Activated CD8-positive, alpha-beta T cell treated with anti-CD3 and anti-CD28 coated beads for 36 hours (primary cell): ENCODE measurements at regions of chr19 and their contacts with region 1.

Region 1: DNA sequence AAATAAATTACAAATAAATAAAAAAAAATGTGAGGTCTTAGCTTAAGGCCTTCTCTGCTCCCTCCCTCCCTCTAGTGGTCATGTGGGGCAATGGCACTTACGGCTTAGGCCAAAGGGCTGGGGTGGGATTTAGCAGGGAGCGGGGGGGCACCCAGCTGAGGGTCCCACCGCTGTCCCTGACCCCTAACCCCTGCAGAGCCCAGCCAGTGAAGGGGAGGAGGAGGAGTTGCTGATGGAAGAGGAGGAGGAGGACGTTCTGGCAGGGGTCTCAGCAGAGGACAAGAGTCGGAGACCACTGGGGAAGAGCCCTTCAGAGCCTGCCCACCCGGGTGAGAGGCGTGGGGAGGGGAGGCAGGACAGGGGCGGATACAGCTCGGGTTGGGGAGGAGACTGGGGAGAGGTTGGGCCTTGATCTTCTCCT is 9.3 kb downstream of the MPND start:
- DNase-seq: peak; percentile 75
- ATAC-seq: peak; percentile 90
- H3K4me3 Mint-ChIP-seq: no peak overlapping the region
- H3K27ac Mint-ChIP-seq: no peak overlapping the region
- H3K4me1 Mint-ChIP-seq: peaks cover 2% of the 10 kb centered on the region
- H3K27me3 Mint-ChIP-seq: no peaks in the 10 kb centered on the region
- CTCF ChIP-seq: peak; percentile 98

Region 2: GRCh38 chr19:4322942-4323665 is 29.6 kb before region 1 on chr19:
- CTCF ChIA-PET with region 1: interaction called, 12 read pairs
- POLR2A ChIA-PET with region 1: interaction called, 5 read pairs
- intact Hi-C with region 1: no loop called
- DNase-seq: no peak
- ATAC-seq: no peak
- H3K4me3 Mint-ChIP-seq: no peak overlapping the region
- H3K27ac Mint-ChIP-seq: no peak overlapping the region
- H3K4me1 Mint-ChIP-seq: peaks cover 18% of the 10 kb centered on the region
- H3K27me3 Mint-ChIP-seq: no peaks in the 10 kb centered on the region
- CTCF ChIP-seq: no peak

Region 3: GRCh38 chr19:4362861-4363510 is 10.3 kb after region 1 on chr19:
- CTCF ChIA-PET with region 1: interaction called, 23 read pairs
- POLR2A ChIA-PET with region 1: interaction called, 3 read pairs
- intact Hi-C with region 1: no loop called
- DNase-seq: no peak
- ATAC-seq: peak; percentile 13
- H3K4me3 Mint-ChIP-seq: no peak overlapping the region
- H3K27ac Mint-ChIP-seq: peak overlapping the region; percentile 15
- H3K4me1 Mint-ChIP-seq: peaks cover 4% of the 10 kb centered on the region
- H3K27me3 Mint-ChIP-seq: no peaks in the 10 kb centered on the region
- CTCF ChIP-seq: peak; percentile 25